ENCODE measurements at regions of chr18 and their contacts with region 1.

Region 1: DNA sequence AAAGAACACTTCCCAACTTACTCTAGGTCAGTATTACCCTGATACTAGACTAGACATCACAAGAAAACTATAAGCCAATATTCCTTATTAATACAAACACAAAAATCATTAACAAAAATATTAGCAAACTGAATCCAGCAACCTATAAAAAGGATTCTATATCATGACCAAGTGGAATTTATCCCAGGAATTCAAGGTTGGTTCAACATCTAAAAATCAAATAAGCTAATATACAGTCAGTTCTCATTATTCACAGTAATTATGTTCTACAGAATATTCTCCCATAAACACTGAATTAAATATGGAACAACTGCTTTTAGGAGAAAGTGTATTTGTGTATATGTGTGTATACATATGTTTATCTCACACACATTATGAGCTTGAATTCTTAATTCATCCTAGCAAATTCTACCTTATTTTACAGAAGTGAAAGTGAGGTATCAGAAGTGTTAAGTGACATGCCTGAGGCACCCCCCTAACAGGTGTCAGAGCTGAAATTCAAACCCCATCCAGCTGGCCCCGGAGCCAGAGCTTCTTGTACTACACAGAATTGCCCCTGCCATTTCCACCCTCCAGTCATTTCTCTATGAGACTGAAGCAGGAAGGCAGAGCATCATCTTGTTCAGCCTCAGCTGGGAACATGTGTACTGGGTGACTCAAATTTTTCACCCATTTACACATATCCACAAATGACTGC is 77.8 kb downstream of the MALT1 start:
- DNase-seq: peak; percentile 21
- H3K4me3 ChIP-seq: no peak overlapping the region
- H3K27ac ChIP-seq: no peak overlapping the region
- H3K4me1 ChIP-seq: no peaks in the 10 kb centered on the region
- CTCF ChIP-seq: no peak

Region 2: DNA sequence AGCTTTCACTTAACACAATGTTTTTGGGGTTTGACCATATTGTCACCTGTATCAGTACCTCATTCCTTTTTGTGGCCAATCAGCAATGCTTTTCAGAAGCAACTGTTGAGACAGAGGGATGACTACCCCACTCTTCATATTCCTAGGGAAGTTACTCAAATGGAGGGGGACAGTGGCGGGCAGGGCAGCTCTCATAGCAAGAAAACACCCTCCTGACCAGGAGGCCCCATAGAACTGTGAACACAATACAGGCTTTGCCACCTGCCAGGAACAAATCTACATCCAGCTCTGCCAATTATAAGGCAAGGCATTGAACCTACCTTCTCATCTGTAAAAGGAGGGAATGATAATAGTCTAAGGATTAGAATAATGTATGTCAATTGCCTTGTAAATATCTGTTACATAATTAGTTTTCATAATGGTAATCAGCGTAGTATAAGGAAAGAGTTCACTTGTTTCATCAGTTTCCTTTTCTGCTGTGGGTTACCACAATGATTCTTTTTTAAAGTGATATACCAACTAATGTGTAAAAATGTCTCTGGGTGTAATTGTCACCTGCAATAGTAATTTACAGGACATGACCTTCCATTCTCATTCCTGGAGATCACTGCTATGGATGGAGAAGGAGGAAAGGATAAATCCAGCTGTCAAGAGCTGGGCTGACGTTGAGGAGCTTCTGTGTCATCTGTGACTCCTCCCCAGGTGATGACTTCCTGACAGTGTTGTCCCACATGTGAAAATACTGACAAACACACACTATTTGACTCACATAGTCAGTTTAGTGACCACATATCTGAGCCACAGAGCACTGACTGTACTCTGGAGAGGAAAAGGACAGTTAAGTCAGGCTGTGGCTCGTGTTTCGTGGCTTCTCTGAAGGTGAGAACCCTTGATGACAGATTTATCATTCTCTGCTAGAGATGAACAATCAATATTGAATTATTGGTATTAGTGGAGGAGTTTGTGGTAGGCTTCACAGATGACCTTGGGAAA is 133.6 kb before region 1 on chr18:
- CTCF ChIA-PET with region 1: no interaction called
- POLR2A ChIA-PET with region 1: no interaction called
- intact Hi-C with region 1: loop called (anchors 10 kb)
- DNase-seq: no peak
- H3K4me3 ChIP-seq: no peak overlapping the region
- H3K27ac ChIP-seq: no peak overlapping the region
- H3K4me1 ChIP-seq: no peaks in the 10 kb centered on the region
- CTCF ChIP-seq: no peak

Region 3: DNA sequence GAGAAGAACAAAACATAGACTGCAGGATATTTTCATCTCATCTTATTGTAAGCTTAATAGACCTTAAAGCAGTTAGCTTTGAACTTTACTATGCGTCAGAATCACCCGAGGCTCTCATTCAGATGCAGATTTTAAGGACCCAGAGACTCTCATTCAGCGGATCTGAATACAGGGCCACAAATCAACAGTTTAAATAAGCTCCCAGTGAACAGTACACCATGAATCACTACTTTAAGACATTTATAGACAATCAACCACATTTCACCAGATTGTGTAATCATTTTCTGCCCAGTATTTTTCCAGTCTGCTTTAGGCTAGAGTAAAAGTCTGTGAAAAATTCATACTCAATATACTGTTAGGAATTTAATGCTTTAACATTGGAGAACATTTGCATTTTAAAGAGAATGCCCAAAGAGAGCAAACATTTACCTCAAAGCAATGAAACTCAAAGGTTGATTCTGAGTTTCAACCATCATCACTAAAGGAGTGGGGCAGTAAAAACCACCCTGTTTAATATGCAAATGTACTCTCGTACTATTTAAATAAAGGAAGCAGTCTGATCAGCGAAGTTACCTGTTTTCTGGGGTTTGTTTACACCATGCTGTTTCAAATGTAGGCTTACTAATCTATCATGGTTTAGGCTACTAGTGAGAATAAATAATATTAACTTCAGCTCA is 109.2 kb before region 1 on chr18:
- CTCF ChIA-PET with region 1: no interaction called
- POLR2A ChIA-PET with region 1: no interaction called
- intact Hi-C with region 1: no loop called
- DNase-seq: no peak
- H3K4me3 ChIP-seq: no peak overlapping the region
- H3K27ac ChIP-seq: no peak overlapping the region
- H3K4me1 ChIP-seq: peaks cover 9% of the 10 kb centered on the region
- CTCF ChIP-seq: no peak

Region 4: GRCh38 chr18:58800582-58800981 is 51.5 kb after region 1 on chr18:
- CTCF ChIA-PET with region 1: no interaction called
- POLR2A ChIA-PET with region 1: no interaction called
- intact Hi-C with region 1: no loop called
- DNase-seq: no peak
- H3K4me3 ChIP-seq: no peak overlapping the region
- H3K27ac ChIP-seq: no peak overlapping the region
- H3K4me1 ChIP-seq: no peaks in the 10 kb centered on the region
- CTCF ChIP-seq: no peak

Measured in OCI-LY7 (cell line).